ENCODE measurements at regions of chr6 and their contacts with region 1.

Region 1: GRCh38 chr6:44041461-44042260 is 85.6 kb downstream of the MRPL14 start:
- DNase-seq: peak; percentile 84
- ATAC-seq: peak; percentile 74
- H3K4me3 ChIP-seq: peak overlapping the region in 1 of 2 experiments; percentile 42; a peak in 3 of 4 replicates
- H3K27ac ChIP-seq: peak overlapping the region; percentile 95
- H3K4me1 ChIP-seq: peaks cover 47 to 75% of the 10 kb centered on the region in 2 experiments
- H3K27me3 ChIP-seq: no peaks in the 10 kb centered on the region
- CTCF ChIP-seq: no peak
- POLR2A ChIP-seq: peak; percentile 27
- RAD21 ChIP-seq: no peak

Region 2: GRCh38 chr6:43702534-43703440 is 338.9 kb before region 1 on chr6:
- CTCF ChIA-PET with region 1: no interaction called
- POLR2A ChIA-PET with region 1: no interaction called
- RAD21 ChIA-PET with region 1: no interaction called
- intact Hi-C with region 1: no loop called
- DNase-seq: peak; percentile 92
- ATAC-seq: peak; percentile 95
- H3K4me3 ChIP-seq: peak overlapping the region; percentile 19 to 44
- H3K27ac ChIP-seq: peak overlapping the region; percentile 64
- H3K4me1 ChIP-seq: peaks cover 36 to 45% of the 10 kb centered on the region in 2 experiments
- H3K27me3 ChIP-seq: no peaks in the 10 kb centered on the region
- CTCF ChIP-seq: no peak
- POLR2A ChIP-seq: peak; percentile 53
- RAD21 ChIP-seq: no peak

Region 3: DNA sequence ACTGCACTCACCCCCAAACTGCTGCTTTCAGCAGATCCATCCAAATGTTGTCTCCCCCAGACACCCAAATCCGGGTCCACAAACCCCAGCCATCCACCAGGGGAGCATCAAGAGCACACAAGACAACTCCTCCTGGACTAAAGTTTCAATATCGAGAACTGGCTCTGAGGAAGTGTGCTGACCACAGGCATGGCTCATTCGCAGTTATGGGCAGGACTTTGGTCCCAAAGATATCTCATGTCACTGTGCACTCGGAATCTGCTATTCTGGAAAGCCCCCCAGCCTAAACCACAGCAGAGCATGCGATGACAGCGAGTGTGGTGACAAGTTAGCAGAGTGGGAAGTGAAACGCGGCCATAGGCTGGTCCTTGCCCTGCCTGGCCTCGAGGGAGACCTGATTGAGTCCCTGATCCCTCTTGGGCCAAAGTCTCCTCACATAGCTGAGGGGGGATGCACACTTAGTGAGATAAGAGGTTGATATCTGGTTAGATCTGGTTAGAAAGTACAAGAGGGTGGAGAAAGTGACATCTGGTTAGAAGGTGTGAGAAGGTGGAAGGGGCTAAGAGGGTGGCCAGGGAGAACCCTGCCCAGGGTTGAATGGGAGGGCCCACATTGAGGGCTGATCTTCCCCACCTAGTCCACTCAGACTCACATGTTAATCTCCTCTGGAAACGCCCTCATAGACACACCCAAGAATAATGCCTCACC is 64.1 kb before region 1 on chr6:
- CTCF ChIA-PET with region 1: no interaction called
- POLR2A ChIA-PET with region 1: no interaction called
- RAD21 ChIA-PET with region 1: no interaction called
- intact Hi-C with region 1: no loop called
- DNase-seq: no peak
- ATAC-seq: no peak
- H3K4me3 ChIP-seq: no peak overlapping the region
- H3K27ac ChIP-seq: no peak overlapping the region
- H3K4me1 ChIP-seq: 0 out of 4 replicates have a peak, but pooled peaks cover 0 to 3% of the 10 kb centered on the region in 2 experiments
- H3K27me3 ChIP-seq: no peaks in the 10 kb centered on the region
- CTCF ChIP-seq: 0 out of 6 replicates have a peak, but pooled peaks of 1 of the 3 experiments have one; percentile 10
- POLR2A ChIP-seq: no peak
- RAD21 ChIP-seq: no peak

Region 4: DNA sequence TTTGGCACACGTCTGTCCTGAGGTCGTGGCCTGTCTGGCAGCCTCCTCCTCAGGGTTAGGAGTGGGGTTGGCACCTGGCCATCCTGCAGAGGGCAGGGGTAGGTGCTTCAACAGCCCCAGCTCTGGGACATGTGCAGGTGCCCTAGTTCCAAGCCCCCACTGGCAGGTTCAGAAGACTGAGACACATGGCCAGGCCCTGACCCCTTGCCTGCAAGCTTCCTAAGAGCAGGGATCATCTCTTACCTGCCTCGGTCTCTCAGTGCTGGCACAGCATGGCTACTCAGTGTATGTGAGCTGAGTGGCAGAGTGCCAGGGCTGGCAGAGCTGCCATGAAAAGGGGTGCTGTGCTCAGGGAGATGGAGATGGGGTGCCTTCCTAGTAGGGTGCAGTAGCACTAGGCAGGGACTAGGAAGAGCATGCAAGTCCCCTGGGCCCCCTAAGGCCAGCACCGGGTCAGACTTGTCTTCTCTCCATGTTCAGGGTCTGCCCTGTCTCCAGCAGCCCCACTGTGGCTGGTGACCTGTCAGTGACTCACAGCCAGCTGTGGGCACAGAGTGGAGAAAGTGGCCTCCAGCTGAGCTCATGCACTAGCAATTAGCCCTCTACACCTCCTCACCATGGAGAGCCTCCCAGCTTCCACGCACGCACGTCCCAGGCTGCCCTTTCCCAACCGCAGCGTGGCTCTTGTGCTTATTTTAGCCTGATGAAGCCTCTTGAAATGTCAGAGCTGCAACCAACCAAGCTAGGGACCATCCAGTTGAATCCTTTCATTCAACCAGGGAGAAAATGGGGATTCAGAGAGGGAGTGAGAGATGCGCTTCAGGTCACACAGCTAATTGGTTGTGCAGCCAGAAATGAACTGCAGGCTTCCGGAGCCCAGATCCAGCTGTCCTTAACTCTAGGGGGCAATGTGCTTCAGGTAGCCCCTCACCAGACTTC is 31.0 kb before region 1 on chr6:
- CTCF ChIA-PET with region 1: no interaction called
- POLR2A ChIA-PET with region 1: interaction called, 12 read pairs
- RAD21 ChIA-PET with region 1: no interaction called
- intact Hi-C with region 1: no loop called
- DNase-seq: peak; percentile 74
- ATAC-seq: peak; percentile 91
- H3K4me3 ChIP-seq: peak overlapping the region; percentile 5 to 14; a peak in 3 of 4 replicates
- H3K27ac ChIP-seq: peak overlapping the region; percentile 24; the same call in 1 of the 2 replicates
- H3K4me1 ChIP-seq: peaks cover 20 to 38% of the 10 kb centered on the region in 2 experiments
- H3K27me3 ChIP-seq: no peaks in the 10 kb centered on the region
- CTCF ChIP-seq: peak in 1 of 3 experiments; percentile 10; a peak in 1 of 6 replicates
- POLR2A ChIP-seq: no peak
- RAD21 ChIP-seq: no peak

Region 5: GRCh38 chr6:44058617-44059358 is 17.1 kb after region 1 on chr6:
- CTCF ChIA-PET with region 1: interaction called, 9 read pairs
- POLR2A ChIA-PET with region 1: interaction called, 10 read pairs
- RAD21 ChIA-PET with region 1: no interaction called
- intact Hi-C with region 1: no loop called
- DNase-seq: peak; percentile 88
- ATAC-seq: peak; percentile 86
- H3K4me3 ChIP-seq: peak overlapping the region in 1 of 2 experiments; percentile 35; a peak in 2 of 4 replicates
- H3K27ac ChIP-seq: peak overlapping the region; percentile 52
- H3K4me1 ChIP-seq: peaks cover 18 to 56% of the 10 kb centered on the region in 2 experiments
- H3K27me3 ChIP-seq: no peaks in the 10 kb centered on the region
- CTCF ChIP-seq: no peak
- POLR2A ChIP-seq: no peak
- RAD21 ChIP-seq: no peak

Region 6: DNA sequence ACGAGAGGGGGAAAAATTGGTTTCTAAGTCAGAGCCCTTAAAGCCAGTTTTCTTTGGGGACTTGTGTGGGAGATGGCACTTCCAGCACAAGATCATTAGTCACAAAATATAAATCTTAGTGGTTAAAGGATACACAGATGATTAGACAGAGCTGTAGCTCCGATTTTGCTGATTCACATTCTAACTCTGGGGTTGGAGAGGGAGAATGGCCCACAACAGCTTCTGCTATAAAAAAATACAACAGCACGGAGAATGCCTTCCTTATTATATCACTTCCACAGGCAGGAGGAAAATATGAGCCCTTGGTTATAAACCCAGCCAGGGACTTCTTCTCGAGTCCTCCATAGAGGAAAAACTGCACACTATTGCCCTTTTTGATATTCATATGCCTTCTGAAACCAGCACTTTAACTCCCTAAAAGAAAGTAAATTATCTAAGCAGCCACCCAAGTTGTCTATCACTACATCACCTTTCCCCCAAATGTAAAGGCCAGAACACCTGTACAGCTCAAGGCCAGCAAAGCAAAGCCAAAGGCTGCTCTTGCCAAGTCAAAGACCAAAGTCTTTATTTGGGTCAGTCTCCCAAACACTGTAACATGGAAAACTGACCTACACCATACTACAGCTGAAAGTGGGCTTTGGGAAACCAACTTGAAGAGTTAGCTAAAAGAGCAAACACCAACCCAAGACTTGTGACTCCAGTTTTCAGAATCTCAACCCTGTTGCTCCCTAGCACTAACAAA is 75.2 kb after region 1 on chr6:
- CTCF ChIA-PET with region 1: no interaction called
- POLR2A ChIA-PET with region 1: no interaction called
- RAD21 ChIA-PET with region 1: no interaction called
- intact Hi-C with region 1: no loop called
- DNase-seq: no peak
- ATAC-seq: no peak
- H3K4me3 ChIP-seq: no peak overlapping the region
- H3K27ac ChIP-seq: no peak overlapping the region
- H3K4me1 ChIP-seq: no peaks in the 10 kb centered on the region
- H3K27me3 ChIP-seq: no peaks in the 10 kb centered on the region
- CTCF ChIP-seq: no peak
- POLR2A ChIP-seq: no peak
- RAD21 ChIP-seq: no peak

Measured in HCT116 (cell line).